ENCODE measurements at regions of chrX and their contacts with region 1.

Region 1: GRCh38 chrX:136839196-136839595 is 41.3 kb downstream of the RBMX start:
- DNase-seq: peak; percentile 15
- ATAC-seq: peak; percentile 35; the same call in 1 of the 2 replicates
- H3K4me3 ChIP-seq: no peak overlapping the region
- H3K27ac ChIP-seq: peak overlapping the region; percentile 57; the same call in 1 of the 2 replicates
- H3K4me1 ChIP-seq: 0 out of 2 replicates have a peak, but pooled peaks cover 2% of the 10 kb centered on the region
- H3K27me3 ChIP-seq: no peaks in the 10 kb centered on the region
- CTCF ChIP-seq: no peak
- POLR2A ChIP-seq: no peak
- RAD21 ChIP-seq: no peak

Region 2: DNA sequence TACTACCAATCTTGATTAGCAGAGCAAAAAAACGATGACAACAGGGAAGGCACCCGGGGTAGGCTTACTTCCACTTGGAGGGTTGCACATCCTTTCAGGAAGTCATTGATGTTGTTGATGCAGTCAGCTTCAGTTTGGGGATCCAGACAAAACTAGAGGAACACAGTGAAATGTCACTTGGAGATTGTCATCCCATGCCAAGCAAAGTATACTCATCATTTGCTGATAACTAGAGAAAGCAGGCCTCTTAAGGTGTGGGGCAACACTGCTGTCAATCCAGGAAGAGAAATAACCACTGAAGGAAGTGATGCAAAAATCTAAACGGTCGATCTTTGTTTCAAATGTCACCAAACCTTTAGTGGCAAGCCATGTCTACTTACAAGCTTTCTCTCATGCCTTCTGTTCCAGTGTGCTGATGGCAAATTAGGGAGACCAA is 59.8 kb before region 1 on chrX:
- CTCF ChIA-PET with region 1: interaction called, 11 read pairs
- POLR2A ChIA-PET with region 1: no interaction called
- dilution Hi-C with region 1: no loop called
- in situ Hi-C with region 1: no loop called
- intact Hi-C with region 1: no loop called
- DNase-seq: no peak
- ATAC-seq: no peak
- H3K4me3 ChIP-seq: no peak overlapping the region
- H3K27ac ChIP-seq: no peak overlapping the region
- H3K4me1 ChIP-seq: peaks cover 2% of the 10 kb centered on the region; the same call in 1 of the 2 replicates
- H3K27me3 ChIP-seq: 0 out of 2 replicates have a peak, but pooled peaks cover 1% of the 10 kb centered on the region
- CTCF ChIP-seq: no peak
- POLR2A ChIP-seq: no peak
- RAD21 ChIP-seq: no peak